PC-9 (cell line): ENCODE measurements at regions of chr9 and their contacts with region 1.

Region 1: DNA sequence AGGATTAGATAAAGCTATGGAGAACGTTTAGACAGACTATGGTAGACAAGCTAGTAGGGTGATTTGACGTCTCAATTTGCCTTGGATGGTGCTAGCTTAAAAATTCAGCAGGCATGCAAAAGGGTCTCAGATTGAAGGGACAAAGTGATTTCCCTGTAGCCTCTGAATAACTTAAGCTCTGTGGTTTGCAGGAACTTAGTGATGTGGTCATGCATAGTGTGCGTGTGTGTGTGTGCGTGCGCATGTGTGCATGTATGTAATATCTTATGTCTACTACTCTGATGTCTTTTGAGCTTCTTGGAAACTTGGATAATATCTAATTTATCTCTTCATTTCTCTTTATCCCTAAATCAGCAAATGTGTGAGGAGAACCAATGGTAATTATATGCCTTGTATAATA is 183.6 kb upstream of the TNC start:
- DNase-seq: no peak
- H3K4me3 ChIP-seq: no peak overlapping the region
- H3K27ac ChIP-seq: no peak overlapping the region
- H3K4me1 ChIP-seq: no peaks in the 10 kb centered on the region
- H3K27me3 ChIP-seq: no peaks in the 10 kb centered on the region
- CTCF ChIP-seq: no peak

Region 2: DNA sequence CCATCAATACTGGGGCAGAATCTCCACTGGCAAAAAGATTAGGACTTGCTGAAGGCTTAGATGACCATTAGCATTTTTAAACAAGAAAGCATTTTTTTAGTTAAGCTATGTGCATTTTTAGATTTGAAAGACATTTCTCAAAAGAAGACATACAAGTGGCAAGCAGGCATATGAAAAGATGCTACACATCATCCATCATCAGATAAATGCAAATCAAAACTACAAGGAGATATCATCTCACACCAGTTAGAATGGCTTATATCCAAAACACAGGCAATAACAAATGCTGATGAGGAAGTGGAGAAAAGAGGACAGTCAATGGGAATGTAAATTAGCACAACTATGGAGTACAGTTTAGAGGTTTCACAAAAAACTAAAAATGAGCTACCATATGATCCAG is 12.0 kb after region 1 on chr9:
- CTCF ChIA-PET with region 1: no interaction called
- POLR2A ChIA-PET with region 1: interaction called, 10 read pairs
- intact Hi-C with region 1: no loop called
- DNase-seq: no peak
- H3K4me3 ChIP-seq: no peak overlapping the region
- H3K27ac ChIP-seq: no peak overlapping the region
- H3K4me1 ChIP-seq: no peaks in the 10 kb centered on the region
- H3K27me3 ChIP-seq: no peaks in the 10 kb centered on the region
- CTCF ChIP-seq: no peak

Region 3: GRCh38 chr9:115349526-115349925 is 47.9 kb after region 1 on chr9:
- CTCF ChIA-PET with region 1: no interaction called
- POLR2A ChIA-PET with region 1: no interaction called
- intact Hi-C with region 1: no loop called
- DNase-seq: peak in 1 of 2 experiments; percentile 77
- H3K4me3 ChIP-seq: no peak overlapping the region
- H3K27ac ChIP-seq: no peak overlapping the region
- H3K4me1 ChIP-seq: peaks cover 15% of the 10 kb centered on the region
- H3K27me3 ChIP-seq: no peaks in the 10 kb centered on the region
- CTCF ChIP-seq: no peak